ENCODE measurements at regions of chr12 and their contacts with region 1.

Region 1: GRCh38 chr12:29733060-29733459 is 50.7 kb downstream of the TMTC1 start:
- DNase-seq: no peak
- H3K4me3 ChIP-seq: no peak overlapping the region
- H3K27ac ChIP-seq: peak overlapping the region; percentile 26 to 35
- H3K4me1 ChIP-seq: no peaks in the 10 kb centered on the region
- H3K27me3 ChIP-seq: no peaks in the 10 kb centered on the region
- CTCF ChIP-seq: no peak
- POLR2A ChIP-seq: no peak

Region 2: DNA sequence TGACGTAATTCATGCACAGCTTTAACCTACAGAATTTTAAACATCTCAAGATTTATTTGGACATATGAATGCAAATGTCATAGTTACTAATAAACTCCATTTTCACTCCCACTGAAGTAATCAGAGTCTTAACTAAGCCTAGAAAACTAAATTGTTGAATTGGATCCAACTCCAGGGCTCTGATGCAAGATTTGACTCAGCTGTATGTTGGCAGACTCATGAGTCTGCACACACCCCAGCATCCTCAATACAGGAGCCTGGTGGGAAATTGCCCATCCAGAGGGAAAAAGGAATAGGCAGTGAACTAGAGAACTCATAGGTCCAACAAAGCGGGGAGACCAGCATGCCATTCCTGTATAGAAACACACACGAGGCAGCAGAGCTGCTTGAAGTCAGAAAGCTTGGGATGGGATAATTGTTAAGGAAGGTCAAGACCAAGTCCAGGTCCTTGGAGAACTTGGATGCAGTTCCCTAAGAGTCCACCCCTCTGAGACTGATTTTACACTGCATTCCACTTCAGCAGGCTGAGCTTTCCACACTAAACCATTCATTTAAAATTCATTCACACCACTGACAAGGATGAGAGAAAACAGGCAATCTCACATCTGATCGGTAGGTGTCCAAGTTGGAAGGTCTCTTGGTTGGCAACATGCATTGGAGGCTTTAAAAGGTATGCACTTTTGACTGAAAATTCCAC is 36.2 kb after region 1 on chr12:
- intact Hi-C with region 1: loop called (anchors 2 kb)
- DNase-seq: no peak
- H3K4me3 ChIP-seq: no peak overlapping the region
- H3K27ac ChIP-seq: peak overlapping the region in 1 of 2 donors; percentile 3
- H3K4me1 ChIP-seq: no peaks in the 10 kb centered on the region
- H3K27me3 ChIP-seq: no peaks in the 10 kb centered on the region
- CTCF ChIP-seq: no peak
- POLR2A ChIP-seq: no peak

Measured in breast epithelium (tissue), 4 donors.